WTC11 (cell line): ENCODE measurements at regions of chr1 and their contacts with region 1.

Region 1: GRCh38 chr1:202274611-202275010 is 67.1 kb downstream of the UBE2T start:
- DNase-seq: peak; percentile 42
- ATAC-seq: peak; percentile 55
- H3K4me3 Mint-ChIP-seq: no peak overlapping the region
- H3K27ac Mint-ChIP-seq: no peak overlapping the region
- H3K4me1 Mint-ChIP-seq: no peaks in the 10 kb centered on the region
- H3K27me3 Mint-ChIP-seq: no peaks in the 10 kb centered on the region; the same call in none of the 2 replicates
- CTCF ChIP-seq: no peak

Region 2: GRCh38 chr1:202315576-202316168 is 41.1 kb after region 1 on chr1:
- CTCF ChIA-PET with region 1: interaction called, 21 read pairs
- POLR2A ChIA-PET with region 1: no interaction called
- DNase-seq: peak; percentile 90
- ATAC-seq: peak; percentile 97
- H3K4me3 Mint-ChIP-seq: no peak overlapping the region
- H3K27ac Mint-ChIP-seq: no peak overlapping the region
- H3K4me1 Mint-ChIP-seq: peaks cover 15% of the 10 kb centered on the region
- H3K27me3 Mint-ChIP-seq: no peaks in the 10 kb centered on the region
- CTCF ChIP-seq: peak; percentile 74; the same call in 1 of the 2 replicates

Region 3: GRCh38 chr1:202329891-202330290 is 55.3 kb after region 1 on chr1:
- CTCF ChIA-PET with region 1: interaction called, 16 read pairs
- POLR2A ChIA-PET with region 1: no interaction called
- DNase-seq: no peak
- ATAC-seq: peak; percentile 87
- H3K4me3 Mint-ChIP-seq: no peak overlapping the region
- H3K27ac Mint-ChIP-seq: peak overlapping the region; percentile 38; the same call in 1 of the 2 replicates
- H3K4me1 Mint-ChIP-seq: no peaks in the 10 kb centered on the region
- H3K27me3 Mint-ChIP-seq: no peaks in the 10 kb centered on the region
- CTCF ChIP-seq: peak; percentile 22; the same call in 1 of the 2 replicates